ENCODE measurements at regions of chr3 and their contacts with region 1.

Region 1: DNA sequence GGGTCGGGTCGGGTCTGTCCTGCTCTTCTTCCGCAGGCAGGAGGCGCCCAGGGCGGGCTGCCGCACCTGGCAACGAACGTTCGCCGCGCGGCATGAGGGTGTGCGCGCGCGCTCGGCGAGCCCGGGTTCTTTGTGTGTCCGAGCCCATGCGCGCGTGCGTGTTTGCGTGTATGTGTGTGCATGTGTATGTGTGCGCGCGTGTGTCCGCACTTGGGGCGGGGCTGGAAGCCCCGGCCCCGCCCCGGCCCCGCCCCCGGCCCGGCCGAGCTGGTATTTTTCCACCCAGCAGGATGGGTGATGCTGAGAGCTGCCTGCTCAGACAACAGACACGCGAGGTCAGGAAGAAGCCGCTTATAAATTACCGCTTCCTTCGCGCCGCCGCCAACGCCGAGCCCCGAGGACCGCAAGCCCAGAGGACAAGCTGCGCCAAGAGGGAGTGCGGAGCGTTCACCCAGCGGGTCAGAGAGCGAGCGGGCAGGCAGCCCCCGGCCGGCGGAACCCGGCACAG is at the start of gene SLC6A6:
- DNase-seq: peak; percentile 88 to 99 (median 95)
- ATAC-seq: peak; percentile 81
- H3K4me3 ChIP-seq: peak within 1 kb of the TSS; percentile 67
- H3K4me3 Mint-ChIP-seq: peak within 1 kb of the TSS; percentile 96
- H3K27ac ChIP-seq: peak within 1 kb of the TSS; percentile 62 to 82
- H3K27ac Mint-ChIP-seq: peak within 1 kb of the TSS; percentile 90
- H3K4me1 ChIP-seq: peaks cover 52% of the 10 kb centered on the region
- H3K4me1 Mint-ChIP-seq: peaks cover 55% of the 10 kb centered on the region
- H3K27me3 ChIP-seq: no peaks in the 10 kb centered on the region
- H3K27me3 Mint-ChIP-seq: no peaks in the 10 kb centered on the region
- CTCF ChIP-seq: peak; percentile 59
- total RNA-seq, gene SLC6A6: 27.8 to 31.2 TPM

Region 2: GRCh38 chr3:12841149-12841970 is 1561.0 kb before region 1 on chr3 and contains the start of gene RPL32:
- CTCF ChIA-PET with region 1: no interaction called
- POLR2A ChIA-PET with region 1: interaction called, 3 read pairs
- intact Hi-C with region 1: loop called in 1 of 2 experiments (anchors 5 kb)
- DNase-seq: peak; percentile 76 to 96 (median 82)
- ATAC-seq: peak; percentile 91
- H3K4me3 ChIP-seq: peak within 1 kb of the TSS; percentile 86
- H3K4me3 Mint-ChIP-seq: peak within 1 kb of the TSS; percentile 93
- H3K27ac ChIP-seq: peak within 1 kb of the TSS; percentile 90 to 94
- H3K27ac Mint-ChIP-seq: peak within 1 kb of the TSS; percentile 99
- H3K4me1 ChIP-seq: peaks cover 39% of the 10 kb centered on the region
- H3K4me1 Mint-ChIP-seq: peaks cover 55% of the 10 kb centered on the region
- H3K27me3 ChIP-seq: no peaks in the 10 kb centered on the region
- H3K27me3 Mint-ChIP-seq: no peaks in the 10 kb centered on the region
- CTCF ChIP-seq: peak; percentile 74
- total RNA-seq, gene RPL32: 4,308 to 4,667 TPM

Region 3: GRCh38 chr3:13976469-13976868 is 425.9 kb before region 1 on chr3:
- CTCF ChIA-PET with region 1: no interaction called
- POLR2A ChIA-PET with region 1: no interaction called
- intact Hi-C with region 1: no loop called
- DNase-seq: no peak
- ATAC-seq: no peak
- H3K4me3 ChIP-seq: no peak overlapping the region
- H3K4me3 Mint-ChIP-seq: no peak overlapping the region
- H3K27ac ChIP-seq: no peak overlapping the region
- H3K27ac Mint-ChIP-seq: no peak overlapping the region
- H3K4me1 ChIP-seq: no peaks in the 10 kb centered on the region
- H3K4me1 Mint-ChIP-seq: no peaks in the 10 kb centered on the region
- H3K27me3 ChIP-seq: peaks cover 0 to 2% of the 10 kb centered on the region in 2 experiments
- H3K27me3 Mint-ChIP-seq: peaks cover 12% of the 10 kb centered on the region
- CTCF ChIP-seq: no peak

Region 4: DNA sequence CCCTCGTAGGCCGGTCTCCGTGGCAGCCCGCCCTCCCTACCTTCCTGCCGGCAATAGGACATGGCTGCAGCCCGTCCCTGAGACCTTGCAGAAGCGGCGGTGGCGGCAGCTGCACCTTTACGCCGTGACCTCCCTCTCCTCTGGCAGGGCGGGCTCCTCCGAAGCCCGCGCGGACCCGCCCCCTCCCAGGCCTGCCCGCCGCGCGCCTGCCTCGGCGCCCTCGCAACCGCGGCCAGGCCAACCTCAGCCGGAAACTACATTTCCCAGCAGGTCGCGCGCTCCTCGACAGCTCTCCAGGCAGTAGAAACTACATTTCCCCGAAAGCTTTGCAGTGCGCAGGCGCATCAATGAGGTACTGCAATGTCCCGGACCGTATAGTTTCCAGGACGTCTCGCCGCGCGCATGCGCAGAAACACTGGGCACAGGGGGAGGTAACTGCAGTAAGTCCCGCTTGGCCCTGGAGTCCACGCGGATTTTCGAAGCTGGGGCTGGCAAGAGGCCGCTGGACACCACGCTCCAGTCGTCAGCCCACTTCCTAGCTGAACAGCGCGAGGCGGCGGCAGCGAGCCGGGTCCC is 277.7 kb before region 1 on chr3 and contains the starts of genes CHCHD4 and TMEM43:
- CTCF ChIA-PET with region 1: no interaction called
- POLR2A ChIA-PET with region 1: interaction called, 6 read pairs
- intact Hi-C with region 1: loop called in 1 of 2 experiments (anchors 2 kb)
- DNase-seq: peak; percentile 94 to 100 (median 98)
- ATAC-seq: peak; percentile 89
- H3K4me3 ChIP-seq: peak within 1 kb of the TSS; percentile 96
- H3K4me3 Mint-ChIP-seq: peak within 1 kb of the TSS; percentile 97
- H3K27ac ChIP-seq: peak within 1 kb of the TSS; percentile 76 to 86
- H3K27ac Mint-ChIP-seq: peak within 1 kb of the TSS; percentile 91
- H3K4me1 ChIP-seq: peaks cover 53% of the 10 kb centered on the region
- H3K4me1 Mint-ChIP-seq: peaks cover 73% of the 10 kb centered on the region
- H3K27me3 ChIP-seq: no peaks in the 10 kb centered on the region
- H3K27me3 Mint-ChIP-seq: no peaks in the 10 kb centered on the region
- CTCF ChIP-seq: no peak
- total RNA-seq, gene CHCHD4: 0.50 to 1.1 TPM
- total RNA-seq, gene TMEM43: 24.8 to 27.6 TPM

Region 5: DNA sequence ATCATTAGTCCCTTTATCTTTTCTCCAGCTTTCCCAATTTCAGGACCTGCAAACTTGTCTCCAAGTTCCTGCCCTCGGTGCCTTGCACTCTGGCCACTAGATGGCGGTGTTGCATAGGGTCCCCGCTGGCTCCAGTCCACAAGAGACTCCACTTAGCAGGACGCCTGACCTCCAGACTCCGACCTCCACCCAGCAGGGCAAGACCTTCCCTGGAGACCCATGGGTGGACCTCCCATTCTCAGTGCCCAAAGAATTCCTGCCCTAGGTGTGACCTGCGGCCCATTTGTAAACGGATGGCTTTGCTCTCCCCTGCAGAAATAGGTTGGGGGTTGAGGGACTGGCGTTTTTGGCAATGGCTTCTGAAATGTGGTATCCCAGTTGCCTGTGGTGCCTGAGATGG is 141.1 kb before region 1 on chr3:
- CTCF ChIA-PET with region 1: no interaction called
- POLR2A ChIA-PET with region 1: no interaction called
- intact Hi-C with region 1: loop called (anchors 2 kb)
- DNase-seq: peak; percentile 55 to 86 (median 72)
- ATAC-seq: peak; percentile 61
- H3K4me3 ChIP-seq: no peak overlapping the region
- H3K4me3 Mint-ChIP-seq: no peak overlapping the region
- H3K27ac ChIP-seq: no peak overlapping the region
- H3K27ac Mint-ChIP-seq: no peak overlapping the region
- H3K4me1 ChIP-seq: peaks cover 3% of the 10 kb centered on the region
- H3K4me1 Mint-ChIP-seq: no peaks in the 10 kb centered on the region
- H3K27me3 ChIP-seq: no peaks in the 10 kb centered on the region
- H3K27me3 Mint-ChIP-seq: no peaks in the 10 kb centered on the region
- CTCF ChIP-seq: peak; percentile 100

Region 6: DNA sequence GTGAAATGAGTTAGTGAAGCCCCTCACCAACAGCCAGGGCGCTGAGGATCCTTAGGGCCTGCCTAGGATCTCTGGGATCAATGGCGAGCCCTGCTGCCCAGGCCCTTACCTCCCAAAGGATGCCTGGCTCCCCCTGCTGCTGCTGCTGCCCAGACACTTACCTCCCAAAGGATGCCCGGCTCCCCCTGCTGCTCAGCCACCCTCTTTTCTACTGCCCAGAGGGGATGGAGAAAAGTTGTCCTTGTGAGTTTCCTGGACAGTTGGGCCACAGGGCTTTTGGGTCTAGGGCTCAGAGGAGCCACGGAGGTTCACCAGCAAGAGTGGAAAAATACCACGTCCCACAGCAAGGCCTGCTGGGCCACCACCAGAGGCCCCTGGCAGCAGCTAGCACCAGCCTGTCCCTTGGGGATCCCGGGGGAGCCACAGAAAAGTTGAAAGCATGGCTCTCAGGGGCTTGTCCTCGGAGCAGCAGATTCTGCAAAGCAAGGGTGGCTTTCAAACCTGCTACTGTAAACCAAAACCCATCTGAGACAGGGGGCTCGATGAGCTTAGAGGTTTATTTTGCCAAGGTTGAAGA is 59.5 kb after region 1 on chr3:
- CTCF ChIA-PET with region 1: interaction called, 30 read pairs
- POLR2A ChIA-PET with region 1: interaction called, 8 read pairs
- intact Hi-C with region 1: loop called (anchors 1 to 2 kb)
- DNase-seq: peak; percentile 14 to 72 (median 45)
- ATAC-seq: peak; percentile 49
- H3K4me3 ChIP-seq: no peak overlapping the region
- H3K4me3 Mint-ChIP-seq: no peak overlapping the region
- H3K27ac ChIP-seq: no peak overlapping the region
- H3K27ac Mint-ChIP-seq: no peak overlapping the region
- H3K4me1 ChIP-seq: no peaks in the 10 kb centered on the region
- H3K4me1 Mint-ChIP-seq: no peaks in the 10 kb centered on the region
- H3K27me3 ChIP-seq: no peaks in the 10 kb centered on the region
- H3K27me3 Mint-ChIP-seq: no peaks in the 10 kb centered on the region
- CTCF ChIP-seq: peak; percentile 41

Region 7: DNA sequence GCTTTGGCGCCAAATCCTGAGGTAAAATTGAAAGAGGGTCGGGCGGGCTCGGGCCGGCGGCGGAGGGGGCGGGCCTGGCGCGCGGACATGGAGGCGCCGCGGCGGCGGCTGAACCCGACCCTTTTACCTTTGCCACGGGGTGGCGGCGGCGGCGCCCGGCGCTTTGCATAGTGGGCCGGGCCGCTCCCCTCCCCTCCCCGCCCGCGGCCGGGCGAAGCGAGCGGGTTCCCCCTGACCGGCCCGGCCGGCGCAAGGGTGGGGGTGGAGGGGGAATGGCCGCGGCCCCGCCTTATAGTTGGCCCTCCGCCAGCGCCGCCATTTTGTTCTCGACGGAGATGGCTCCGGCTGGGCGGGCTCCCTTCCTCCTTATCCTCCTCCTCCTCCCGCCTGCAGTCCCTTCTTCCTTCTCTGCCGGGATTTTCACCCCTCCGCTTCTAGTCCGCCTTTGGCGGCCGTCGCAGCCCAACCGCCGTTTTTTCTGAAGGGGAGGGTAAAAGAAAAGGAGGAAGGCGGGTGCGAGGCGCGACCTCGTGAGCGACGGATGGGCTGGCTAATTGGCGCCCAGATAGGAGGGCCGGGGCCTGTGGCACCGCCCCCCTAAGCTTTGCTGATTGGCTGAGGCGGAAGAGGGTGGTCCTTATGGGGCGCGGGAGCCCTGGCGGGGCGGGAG is 545.7 kb after region 1 on chr3:
- CTCF ChIA-PET with region 1: no interaction called
- POLR2A ChIA-PET with region 1: interaction called, 3 read pairs
- intact Hi-C with region 1: loop called in 1 of 2 experiments (anchors 10 kb)
- DNase-seq: peak; percentile 93 to 97 (median 95)
- ATAC-seq: peak; percentile 90
- H3K4me3 ChIP-seq: peak overlapping the region; percentile 96
- H3K4me3 Mint-ChIP-seq: peak overlapping the region; percentile 98
- H3K27ac ChIP-seq: peak overlapping the region; percentile 98 to 99
- H3K27ac Mint-ChIP-seq: peak overlapping the region; percentile 98
- H3K4me1 ChIP-seq: peaks cover 30% of the 10 kb centered on the region
- H3K4me1 Mint-ChIP-seq: peaks cover 66% of the 10 kb centered on the region
- H3K27me3 ChIP-seq: no peaks in the 10 kb centered on the region
- H3K27me3 Mint-ChIP-seq: no peaks in the 10 kb centered on the region
- CTCF ChIP-seq: no peak